ENCODE measurements at regions of chr16 and their contacts with region 1.

Region 1: GRCh38 chr16:19086322-19087199 is 19.1 kb downstream of the COQ7 start:
- DNase-seq: peak; percentile 58 to 88 (median 70)
- ATAC-seq: peak; percentile 95
- H3K4me3 ChIP-seq: peak overlapping the region; percentile 46
- H3K4me3 Mint-ChIP-seq: peak overlapping the region; percentile 34
- H3K27ac ChIP-seq: no peak overlapping the region
- H3K27ac Mint-ChIP-seq: no peak overlapping the region
- H3K4me1 ChIP-seq: peaks cover 10% of the 10 kb centered on the region
- H3K4me1 Mint-ChIP-seq: peaks cover 6% of the 10 kb centered on the region
- H3K27me3 ChIP-seq: peaks cover 0 to 10% of the 10 kb centered on the region in 2 experiments
- H3K27me3 Mint-ChIP-seq: peaks cover 12% of the 10 kb centered on the region
- CTCF ChIP-seq: peak; percentile 99

Region 2: DNA sequence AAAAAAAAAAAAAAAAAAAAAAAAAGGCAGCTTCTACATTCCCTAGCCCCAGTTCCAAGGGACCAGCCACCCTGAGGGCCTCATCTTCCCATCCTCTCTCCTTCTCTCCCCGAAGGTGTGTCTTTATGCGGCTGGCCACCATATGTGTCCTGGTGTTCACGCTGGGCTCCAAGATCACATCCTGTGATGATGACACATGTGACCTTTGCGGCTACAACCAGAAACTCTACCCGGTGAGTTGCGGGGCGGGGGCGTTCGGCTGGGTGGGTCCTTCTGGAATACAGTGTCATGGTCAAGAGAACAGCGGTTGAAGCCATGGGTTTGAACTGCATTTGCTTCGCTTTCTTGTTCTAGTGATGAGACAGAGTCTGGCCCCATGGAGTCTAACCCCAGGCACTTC is 41.8 kb before region 1 on chr16:
- CTCF ChIA-PET with region 1: no interaction called
- POLR2A ChIA-PET with region 1: no interaction called
- intact Hi-C with region 1: no loop called
- DNase-seq: no peak
- ATAC-seq: no peak
- H3K4me3 ChIP-seq: no peak overlapping the region
- H3K4me3 Mint-ChIP-seq: no peak overlapping the region
- H3K27ac ChIP-seq: no peak overlapping the region
- H3K27ac Mint-ChIP-seq: no peak overlapping the region
- H3K4me1 ChIP-seq: no peaks in the 10 kb centered on the region
- H3K4me1 Mint-ChIP-seq: no peaks in the 10 kb centered on the region
- H3K27me3 ChIP-seq: no peaks in the 10 kb centered on the region
- H3K27me3 Mint-ChIP-seq: peaks cover 4% of the 10 kb centered on the region
- CTCF ChIP-seq: no peak

Region 3: DNA sequence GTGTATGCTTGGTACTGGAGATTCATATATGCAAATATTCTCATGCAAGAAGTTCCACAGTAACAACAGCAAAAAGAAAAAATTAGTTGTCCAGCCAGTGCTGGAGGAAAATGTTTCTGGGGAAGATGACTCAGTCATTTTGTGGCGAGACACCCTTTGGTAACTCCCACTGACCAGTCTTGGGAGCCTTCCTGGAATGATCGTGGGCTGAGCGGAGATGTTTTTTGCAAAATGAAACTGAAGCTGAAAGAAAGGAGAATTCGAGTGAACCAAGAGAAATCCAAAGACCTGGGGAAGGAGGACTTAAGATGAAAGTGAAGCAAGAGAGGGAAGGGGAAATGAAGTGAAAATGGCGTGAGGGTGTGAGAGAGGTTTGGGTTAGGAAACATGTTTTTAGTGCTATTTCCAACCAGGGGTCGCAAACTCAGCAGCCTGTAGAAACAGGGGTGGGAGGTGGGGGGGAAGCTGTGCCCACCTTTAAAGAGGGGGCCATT is 32.4 kb after region 1 on chr16:
- CTCF ChIA-PET with region 1: no interaction called
- POLR2A ChIA-PET with region 1: no interaction called
- intact Hi-C with region 1: no loop called
- DNase-seq: peak in 3 of 14 experiments; percentile 32 to 56 (median 54)
- ATAC-seq: no peak
- H3K4me3 ChIP-seq: peak overlapping the region; percentile 36
- H3K4me3 Mint-ChIP-seq: peak overlapping the region; percentile 23
- H3K27ac ChIP-seq: no peak overlapping the region
- H3K27ac Mint-ChIP-seq: no peak overlapping the region
- H3K4me1 ChIP-seq: peaks cover 18% of the 10 kb centered on the region
- H3K4me1 Mint-ChIP-seq: peaks cover 19% of the 10 kb centered on the region
- H3K27me3 ChIP-seq: peaks cover 10 to 17% of the 10 kb centered on the region in 2 experiments
- H3K27me3 Mint-ChIP-seq: peaks cover 28% of the 10 kb centered on the region
- CTCF ChIP-seq: no peak

Region 4: DNA sequence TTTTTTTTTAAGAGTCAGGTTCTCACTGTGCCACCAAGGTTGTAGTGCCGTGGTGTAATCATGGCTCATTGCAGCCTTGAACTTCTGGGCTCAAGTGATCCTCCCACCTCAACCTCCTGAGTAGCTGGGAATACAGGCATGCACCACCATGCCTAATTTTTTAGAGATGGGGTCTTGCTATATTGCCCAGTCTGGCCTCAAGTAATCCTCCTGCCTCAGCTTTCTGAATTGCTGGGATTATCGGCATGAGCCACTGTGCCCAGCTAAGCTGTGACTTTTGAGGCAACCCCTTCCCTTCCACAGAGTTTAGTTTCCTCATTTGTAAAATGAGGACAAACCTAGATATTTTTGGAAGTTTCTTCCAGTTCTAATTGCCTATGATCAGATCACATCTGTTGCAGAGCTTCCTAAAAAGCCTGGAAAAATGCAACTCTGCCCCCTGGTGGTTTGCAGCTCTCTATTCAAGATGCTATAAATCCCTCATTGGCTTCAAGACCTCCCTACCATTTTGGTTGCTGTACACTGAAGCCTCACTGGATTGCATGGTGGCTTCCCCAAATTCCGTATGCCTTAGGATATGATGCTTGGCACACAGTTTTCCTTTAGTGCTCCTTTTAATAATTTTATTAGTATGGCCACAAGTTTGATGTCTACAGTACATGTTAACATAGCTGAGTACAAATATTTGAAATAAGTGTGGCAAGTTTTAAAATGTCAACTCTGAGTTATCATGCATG is 416.0 kb after region 1 on chr16:
- CTCF ChIA-PET with region 1: interaction called, 28 read pairs
- POLR2A ChIA-PET with region 1: no interaction called
- intact Hi-C with region 1: loop called (anchors 1 kb)
- DNase-seq: peak; percentile 27 to 78 (median 54)
- ATAC-seq: peak; percentile 52
- H3K4me3 ChIP-seq: no peak overlapping the region
- H3K4me3 Mint-ChIP-seq: no peak overlapping the region
- H3K27ac ChIP-seq: no peak overlapping the region
- H3K27ac Mint-ChIP-seq: no peak overlapping the region
- H3K4me1 ChIP-seq: no peaks in the 10 kb centered on the region
- H3K4me1 Mint-ChIP-seq: no peaks in the 10 kb centered on the region
- H3K27me3 ChIP-seq: no peaks in the 10 kb centered on the region
- H3K27me3 Mint-ChIP-seq: no peaks in the 10 kb centered on the region
- CTCF ChIP-seq: peak; percentile 73

Region 5: GRCh38 chr16:20383106-20384029 is 1296.8 kb after region 1 on chr16:
- CTCF ChIA-PET with region 1: no interaction called
- POLR2A ChIA-PET with region 1: no interaction called
- intact Hi-C with region 1: loop called in 1 of 2 experiments (anchors 10 kb)
- DNase-seq: peak in 13 of 14 experiments; percentile 3 to 63 (median 17)
- ATAC-seq: peak; percentile 66
- H3K4me3 ChIP-seq: no peak overlapping the region
- H3K4me3 Mint-ChIP-seq: no peak overlapping the region
- H3K27ac ChIP-seq: no peak overlapping the region
- H3K27ac Mint-ChIP-seq: no peak overlapping the region
- H3K4me1 ChIP-seq: peaks cover 6% of the 10 kb centered on the region
- H3K4me1 Mint-ChIP-seq: no peaks in the 10 kb centered on the region
- H3K27me3 ChIP-seq: peaks cover 7 to 8% of the 10 kb centered on the region in 2 experiments
- H3K27me3 Mint-ChIP-seq: peaks cover 38% of the 10 kb centered on the region
- CTCF ChIP-seq: peak; percentile 66